ENCODE measurements at regions of chr11 and their contacts with region 1.

Region 1: GRCh38 chr11:111422494-111423249 is 43.6 kb upstream of the POU2AF1 start:
- DNase-seq: peak; percentile 71
- H3K4me3 ChIP-seq: no peak overlapping the region
- H3K27ac ChIP-seq: no peak overlapping the region
- H3K4me1 ChIP-seq: no peaks in the 10 kb centered on the region
- H3K27me3 ChIP-seq: no peaks in the 10 kb centered on the region
- CTCF ChIP-seq: peak; percentile 69

Region 2: GRCh38 chr11:111299101-111300026 is 123.3 kb before region 1 on chr11:
- intact Hi-C with region 1: loop called (anchors 5 kb)
- DNase-seq: peak; percentile 74
- H3K4me3 ChIP-seq: peak overlapping the region; percentile 67
- H3K27ac ChIP-seq: peak overlapping the region; percentile 60
- H3K4me1 ChIP-seq: peaks cover 5% of the 10 kb centered on the region
- H3K27me3 ChIP-seq: no peaks in the 10 kb centered on the region
- CTCF ChIP-seq: peak; percentile 59

Measured in colonic mucosa (tissue), 4 donors.